Activated CD4-positive, alpha-beta memory T cell treated with anti-CD3 and anti-CD28 coated beads for 36 hours (primary cell): ENCODE measurements at regions of chrX and their contacts with region 1.

Region 1: GRCh38 chrX:19799319-19800182 is 87.8 kb downstream of the SH3KBP1 start:
- DNase-seq: peak; percentile 68
- H3K4me3 Mint-ChIP-seq: peak overlapping the region; percentile 87
- H3K27ac Mint-ChIP-seq: peak overlapping the region; percentile 100
- H3K4me1 Mint-ChIP-seq: peaks cover 59% of the 10 kb centered on the region
- H3K27me3 Mint-ChIP-seq: no peaks in the 10 kb centered on the region

Region 2: DNA sequence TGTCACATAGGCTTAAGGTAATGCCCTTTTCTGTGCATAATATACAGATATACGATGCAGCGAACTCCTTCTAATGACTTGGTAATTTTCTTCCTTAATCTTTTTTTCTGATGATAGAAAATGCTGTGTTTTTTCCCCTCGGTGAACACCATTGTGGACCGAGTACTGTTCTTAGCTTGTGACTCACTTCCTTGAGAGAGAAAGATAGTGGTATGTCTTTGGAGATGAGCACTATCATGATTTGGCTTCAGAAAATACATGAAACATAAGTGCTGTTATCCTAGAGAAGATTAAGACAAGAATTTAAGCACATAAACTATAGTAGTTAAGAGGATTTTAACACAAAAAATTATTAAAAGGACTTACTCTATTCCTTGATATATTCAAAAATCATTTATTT is 1191.6 kb before region 1 on chrX:
- CTCF ChIA-PET with region 1: no interaction called
- POLR2A ChIA-PET with region 1: no interaction called
- intact Hi-C with region 1: no loop called
- DNase-seq: no peak
- H3K4me3 Mint-ChIP-seq: no peak overlapping the region
- H3K27ac Mint-ChIP-seq: no peak overlapping the region
- H3K4me1 Mint-ChIP-seq: no peaks in the 10 kb centered on the region
- H3K27me3 Mint-ChIP-seq: no peaks in the 10 kb centered on the region

Region 3: DNA sequence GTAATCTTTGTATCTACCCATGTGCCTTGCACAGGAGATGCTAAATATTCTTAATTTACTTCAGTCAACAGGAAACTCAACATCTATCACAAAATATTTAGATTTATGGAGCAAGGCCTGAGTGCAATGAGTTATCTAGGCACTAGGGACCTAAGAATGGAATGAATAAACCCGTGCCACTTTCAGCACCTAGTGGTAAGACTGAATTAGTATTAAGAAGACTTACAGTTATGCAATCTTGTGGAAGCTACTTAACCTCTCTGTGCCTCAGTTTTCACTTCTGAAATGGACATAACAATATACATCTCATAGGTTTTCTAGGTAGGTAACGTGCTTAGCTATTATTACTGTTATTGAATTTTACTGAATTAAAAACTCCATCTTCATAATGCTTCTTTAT is 139.6 kb before region 1 on chrX:
- CTCF ChIA-PET with region 1: no interaction called
- POLR2A ChIA-PET with region 1: no interaction called
- intact Hi-C with region 1: no loop called
- DNase-seq: no peak
- H3K4me3 Mint-ChIP-seq: no peak overlapping the region
- H3K27ac Mint-ChIP-seq: no peak overlapping the region
- H3K4me1 Mint-ChIP-seq: peaks cover 51% of the 10 kb centered on the region
- H3K27me3 Mint-ChIP-seq: no peaks in the 10 kb centered on the region

Region 4: GRCh38 chrX:19747652-19748610 is 51.6 kb before region 1 on chrX:
- CTCF ChIA-PET with region 1: interaction called, 3 read pairs
- POLR2A ChIA-PET with region 1: interaction called, 5 read pairs
- intact Hi-C with region 1: loop called (anchors 2 kb)
- DNase-seq: peak; percentile 85
- H3K4me3 Mint-ChIP-seq: peak overlapping the region; percentile 64
- H3K27ac Mint-ChIP-seq: peak overlapping the region; percentile 97
- H3K4me1 Mint-ChIP-seq: peaks cover 91% of the 10 kb centered on the region
- H3K27me3 Mint-ChIP-seq: no peaks in the 10 kb centered on the region

Region 5: DNA sequence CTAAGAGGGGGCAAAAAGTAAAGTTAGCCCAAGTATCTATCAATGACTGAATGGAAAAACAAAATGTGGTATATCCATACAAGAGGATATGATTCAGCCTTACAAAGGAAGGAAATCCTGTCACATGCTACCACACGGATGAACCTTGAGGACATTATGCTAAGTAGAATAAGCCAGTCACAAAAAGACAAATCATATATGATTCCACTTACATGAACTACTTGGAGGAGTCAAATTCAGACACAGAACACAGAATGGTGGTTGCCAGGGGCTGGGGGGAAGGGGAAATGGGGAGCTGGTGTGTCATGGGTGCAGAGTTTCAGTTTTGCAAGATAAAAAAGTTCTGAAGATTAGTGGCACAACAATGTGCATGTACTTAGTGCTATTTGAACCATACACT is 13.9 kb before region 1 on chrX:
- CTCF ChIA-PET with region 1: no interaction called
- POLR2A ChIA-PET with region 1: no interaction called
- intact Hi-C with region 1: loop called (anchors 2 kb)
- DNase-seq: peak; percentile 86
- H3K4me3 Mint-ChIP-seq: no peak overlapping the region
- H3K27ac Mint-ChIP-seq: peak overlapping the region; percentile 94
- H3K4me1 Mint-ChIP-seq: peaks cover 79% of the 10 kb centered on the region
- H3K27me3 Mint-ChIP-seq: no peaks in the 10 kb centered on the region

Region 6: DNA sequence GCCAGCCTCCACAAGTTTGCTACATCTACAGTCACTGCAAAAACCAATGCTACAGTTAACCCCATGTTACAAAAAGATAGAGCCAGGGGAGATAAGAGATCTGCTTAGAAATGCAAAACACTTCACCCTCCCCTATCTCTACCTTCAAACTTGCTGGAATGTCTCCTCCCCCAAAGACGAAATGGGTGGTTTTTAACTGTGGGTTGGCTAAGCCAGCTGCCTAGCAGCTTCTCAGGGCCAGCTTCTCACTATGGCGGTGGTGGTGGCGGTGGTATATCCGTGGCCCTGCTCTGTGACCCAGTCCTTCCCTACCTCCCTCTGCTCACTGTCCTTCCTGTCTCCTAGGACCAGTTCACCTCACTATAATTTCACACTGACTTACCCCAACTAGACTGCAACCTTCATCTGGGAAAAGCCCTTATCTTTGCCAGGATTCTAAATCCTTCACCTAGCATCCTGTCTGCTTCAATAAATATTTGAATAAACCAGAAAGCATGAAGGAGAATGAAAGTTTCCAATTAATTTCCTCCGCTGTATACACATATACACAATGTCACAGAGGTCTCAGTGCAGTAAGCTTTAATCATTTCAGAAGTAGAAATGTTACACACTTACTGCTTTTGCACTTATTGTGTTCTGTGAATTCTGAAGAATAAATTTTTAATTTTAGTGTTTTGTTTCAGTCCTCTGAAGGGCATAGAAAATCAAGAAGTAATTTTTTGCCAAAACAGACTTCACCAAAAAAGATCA is 41.5 kb after region 1 on chrX:
- CTCF ChIA-PET with region 1: no interaction called
- POLR2A ChIA-PET with region 1: interaction called, 6 read pairs
- intact Hi-C with region 1: loop called (anchors 1 kb)
- DNase-seq: peak; percentile 63
- H3K4me3 Mint-ChIP-seq: peak overlapping the region; percentile 60
- H3K27ac Mint-ChIP-seq: peak overlapping the region; percentile 98
- H3K4me1 Mint-ChIP-seq: peaks cover 67% of the 10 kb centered on the region
- H3K27me3 Mint-ChIP-seq: no peaks in the 10 kb centered on the region

Region 7: DNA sequence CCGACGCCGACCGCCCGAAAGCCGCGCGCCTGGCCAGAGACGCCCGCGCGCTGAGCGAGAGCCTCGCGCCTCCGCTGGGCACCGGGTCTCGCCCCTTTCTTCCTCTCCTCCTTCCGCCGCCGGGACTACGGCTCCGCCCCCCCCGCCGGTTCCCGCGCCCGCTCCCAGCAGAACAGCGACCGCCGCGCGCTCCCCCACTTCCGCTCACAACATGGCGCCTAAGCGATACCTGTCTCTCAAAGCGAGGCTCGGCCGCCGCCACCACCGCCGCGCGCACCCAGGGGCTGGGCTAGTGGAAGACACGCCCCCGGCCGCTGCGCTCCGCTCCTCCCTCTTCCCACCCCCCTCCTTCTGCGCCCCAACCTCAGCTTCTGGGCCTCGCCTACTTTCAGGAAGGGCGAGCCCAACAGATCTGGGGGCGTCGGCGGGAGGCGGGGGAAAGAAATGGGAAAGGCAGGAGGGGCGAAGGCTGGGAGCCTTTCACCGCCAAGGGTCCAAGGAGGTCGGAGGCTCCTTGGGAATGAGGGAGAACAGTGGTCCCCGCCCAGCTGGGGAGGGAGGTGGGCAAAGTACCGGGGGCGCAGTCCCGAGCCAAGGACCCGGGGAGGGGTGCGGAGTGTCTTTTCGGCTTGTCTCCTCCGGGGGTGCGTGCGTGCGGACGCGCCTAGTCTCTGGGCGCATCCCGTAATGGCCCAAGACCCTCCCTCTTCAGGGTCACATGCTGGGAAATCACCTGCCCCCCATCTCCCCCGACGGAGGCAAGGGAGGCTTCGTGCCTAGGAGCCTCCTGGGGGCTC is 467.5 kb after region 1 on chrX and contains the start of gene RPS6KA3:
- CTCF ChIA-PET with region 1: no interaction called
- POLR2A ChIA-PET with region 1: no interaction called
- intact Hi-C with region 1: no loop called
- DNase-seq: peak; percentile 93
- H3K4me3 Mint-ChIP-seq: peak within 1 kb of the TSS; percentile 95
- H3K27ac Mint-ChIP-seq: peak within 1 kb of the TSS; percentile 99
- H3K4me1 Mint-ChIP-seq: peaks cover 18% of the 10 kb centered on the region
- H3K27me3 Mint-ChIP-seq: no peaks in the 10 kb centered on the region
- total RNA-seq, gene RPS6KA3: 51.8 to 52.0 TPM